Left lung (tissue), 14 donors: ENCODE measurements at regions of chr1 and their contacts with region 1.

Region 1: DNA sequence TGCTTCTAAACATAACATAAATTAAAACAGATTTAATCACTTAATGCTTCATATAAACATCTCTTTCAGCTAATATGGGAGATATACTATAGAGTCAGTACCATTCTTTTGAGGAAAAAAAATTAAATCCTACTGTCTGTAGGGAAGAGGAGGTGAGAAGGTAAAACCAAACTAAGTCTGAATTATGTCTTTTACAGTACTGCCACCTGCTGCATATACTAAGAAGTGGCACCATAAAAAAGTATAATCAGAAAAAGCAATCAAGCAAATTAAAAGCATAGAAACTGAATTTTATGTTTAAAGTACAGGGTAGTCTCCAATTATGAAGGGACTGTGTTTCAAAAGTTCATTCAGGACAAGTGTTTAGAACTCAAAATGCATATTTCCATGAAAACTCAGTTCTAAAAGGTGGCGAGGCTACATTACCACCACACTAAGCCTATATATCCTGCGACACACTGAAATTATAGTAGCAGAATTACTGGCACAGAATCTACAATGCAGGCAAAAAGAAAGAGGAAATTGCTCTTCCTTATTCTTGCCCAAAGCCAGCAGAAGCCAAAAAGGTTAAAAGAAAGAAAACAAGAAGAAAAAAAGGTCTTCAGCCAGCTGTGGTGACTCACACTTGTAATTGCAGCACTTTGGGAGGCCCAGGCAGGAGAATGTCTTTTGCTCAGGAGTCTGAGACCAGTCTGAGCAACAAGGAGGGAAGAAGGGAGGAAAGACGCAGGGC is 9.0 kb downstream of the NSL1 start:
- DNase-seq: peak in 1 of 4 donors; percentile 17
- ATAC-seq: peak; percentile 84
- H3K4me3 ChIP-seq: no peak overlapping the region
- H3K27ac ChIP-seq: peak overlapping the region in 1 of 2 donors; percentile 66
- H3K4me1 ChIP-seq: peaks cover 0 to 18% of the 10 kb centered on the region in 2 donors
- H3K27me3 ChIP-seq: no peaks in the 10 kb centered on the region
- CTCF ChIP-seq: peak; percentile 44 to 50

Region 2: GRCh38 chr1:212665241-212666115 is 117.1 kb before region 1 on chr1:
- intact Hi-C with region 1: loop called in 1 of 2 experiments (anchors 5 kb)
- DNase-seq: peak; percentile 84 to 97 (median 88)
- ATAC-seq: peak; percentile 97
- H3K4me3 ChIP-seq: peak overlapping the region; percentile 40 to 49
- H3K27ac ChIP-seq: peak overlapping the region in 1 of 2 donors; percentile 78
- H3K4me1 ChIP-seq: peaks cover 8 to 53% of the 10 kb centered on the region in 2 donors
- H3K27me3 ChIP-seq: no peaks in the 10 kb centered on the region
- CTCF ChIP-seq: peak; percentile 95 to 97

Region 3: DNA sequence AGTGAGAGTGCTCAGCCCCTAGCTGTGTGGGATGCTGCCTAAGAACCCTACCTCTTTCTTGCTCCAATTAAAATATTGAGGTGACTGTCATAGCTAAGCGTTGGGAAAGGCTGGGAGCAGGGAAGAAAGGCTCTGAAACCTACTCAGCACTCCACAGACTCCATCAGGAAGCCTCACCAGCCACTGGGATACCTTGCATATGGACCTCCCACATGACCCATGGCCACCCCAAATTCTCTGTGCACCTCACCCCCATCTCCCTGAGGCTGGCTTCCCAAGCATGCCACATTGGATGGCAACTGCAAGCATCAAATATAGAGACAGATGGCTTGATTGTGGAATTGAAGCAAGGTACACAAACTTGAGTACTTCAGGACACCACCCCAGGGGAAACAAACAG is 117.3 kb after region 1 on chr1:
- intact Hi-C with region 1: no loop called
- DNase-seq: no peak
- ATAC-seq: no peak
- H3K4me3 ChIP-seq: no peak overlapping the region
- H3K27ac ChIP-seq: no peak overlapping the region
- H3K4me1 ChIP-seq: no peaks in the 10 kb centered on the region
- H3K27me3 ChIP-seq: no peaks in the 10 kb centered on the region
- CTCF ChIP-seq: no peak

Region 4: DNA sequence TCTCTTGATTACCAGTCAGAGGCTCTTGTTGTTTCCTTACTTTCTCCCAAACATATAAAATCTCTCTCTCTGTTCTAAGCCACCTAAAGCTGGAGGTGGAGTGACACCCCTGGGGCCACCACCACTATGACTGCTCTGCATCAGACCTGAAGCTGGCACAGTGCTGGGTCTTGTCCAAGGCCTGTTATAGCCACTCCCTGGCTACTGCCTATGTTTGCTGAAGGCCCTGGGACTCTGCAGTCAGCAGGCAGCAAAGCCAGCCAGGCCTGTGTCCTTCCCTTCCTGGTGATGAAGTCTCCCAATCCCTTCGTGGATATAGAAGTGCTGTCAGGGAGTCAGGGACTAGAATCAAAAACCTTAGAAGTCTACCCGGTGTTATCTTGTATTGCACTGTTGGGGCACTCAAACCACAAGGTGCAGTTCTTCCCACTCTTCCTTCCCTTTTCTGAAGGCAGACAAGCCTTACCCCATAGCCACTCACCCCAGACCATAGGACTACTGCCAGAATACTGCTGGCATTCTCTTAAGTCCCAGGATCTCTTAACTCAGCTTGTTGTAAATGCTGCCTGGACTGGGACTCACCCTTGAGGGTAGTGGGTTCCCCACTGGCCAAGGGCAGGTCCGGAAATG is 371.6 kb after region 1 on chr1:
- intact Hi-C with region 1: no loop called
- DNase-seq: no peak
- ATAC-seq: peak; percentile 24
- H3K4me3 ChIP-seq: no peak overlapping the region
- H3K27ac ChIP-seq: no peak overlapping the region
- H3K4me1 ChIP-seq: no peaks in the 10 kb centered on the region
- H3K27me3 ChIP-seq: no peaks in the 10 kb centered on the region
- CTCF ChIP-seq: no peak